Heart left ventricle (tissue), 16 donors: ENCODE measurements at regions of chr18 and their contacts with region 1.

Region 1: GRCh38 chr18:55405893-55406406 is 182.0 kb downstream of the TCF4 start:
- DNase-seq: peak; percentile 87 to 93 (median 92)
- ATAC-seq: peak; percentile 83 to 91 (median 88)
- H3K4me3 ChIP-seq: peak overlapping the region in 1 of 12 donors; percentile 3
- H3K27ac ChIP-seq: peak overlapping the region; percentile 50 to 86 (median 80)
- H3K4me1 ChIP-seq: peaks cover 0 to 55% (median 20%) of the 10 kb centered on the region in 12 donors
- H3K27me3 ChIP-seq: no peaks in the 10 kb centered on the region
- CTCF ChIP-seq: peak in 5 of 12 donors; percentile 5 to 35 (median 22)
- POLR2A ChIP-seq: no peak

Region 2: DNA sequence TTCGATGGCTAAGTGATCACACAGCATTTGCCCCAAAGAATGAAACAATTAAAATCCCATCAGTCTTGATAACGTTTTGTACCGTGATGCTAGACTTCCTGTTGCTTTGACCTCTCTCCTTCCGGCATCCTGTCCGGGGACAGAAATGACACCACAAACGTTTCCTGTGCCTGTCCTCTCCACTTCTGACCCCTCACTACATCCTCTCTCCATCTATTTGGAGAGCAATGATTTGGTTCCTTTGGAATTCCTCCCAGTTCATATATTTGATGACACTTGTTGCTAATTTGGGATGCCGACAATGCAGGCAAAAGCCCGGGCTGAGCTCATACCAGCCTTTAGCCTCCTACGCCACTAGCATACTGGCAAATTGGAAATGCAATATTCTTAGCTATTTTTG is 295.5 kb before region 1 on chr18:
- intact Hi-C with region 1: loop called in 1 of 10 experiments (anchors 10 kb)
- DNase-seq: peak in 4 of 5 donors; percentile 35 to 69 (median 48)
- ATAC-seq: peak; percentile 83 to 96 (median 90)
- H3K4me3 ChIP-seq: no peak overlapping the region
- H3K27ac ChIP-seq: peak overlapping the region in 11 of 12 donors; percentile 39 to 88 (median 77)
- H3K4me1 ChIP-seq: peaks cover 0 to 28% (median 8%) of the 10 kb centered on the region in 12 donors
- H3K27me3 ChIP-seq: no peaks in the 10 kb centered on the region
- CTCF ChIP-seq: no peak
- POLR2A ChIP-seq: no peak

Region 3: GRCh38 chr18:55337908-55338521 is 67.9 kb before region 1 on chr18:
- intact Hi-C with region 1: loop called in 4 of 10 experiments (anchors 5 to 10 kb)
- DNase-seq: peak; percentile 33 to 60 (median 44)
- ATAC-seq: peak; percentile 43 to 87 (median 82)
- H3K4me3 ChIP-seq: peak overlapping the region in 8 of 12 donors; percentile 5 to 41 (median 33)
- H3K27ac ChIP-seq: peak overlapping the region; percentile 24 to 90 (median 84)
- H3K4me1 ChIP-seq: peaks cover 4 to 71% (median 37%) of the 10 kb centered on the region in 12 donors
- H3K27me3 ChIP-seq: no peaks in the 10 kb centered on the region
- CTCF ChIP-seq: no peak
- POLR2A ChIP-seq: peak in 1 of 2 donors; percentile 43

Region 4: DNA sequence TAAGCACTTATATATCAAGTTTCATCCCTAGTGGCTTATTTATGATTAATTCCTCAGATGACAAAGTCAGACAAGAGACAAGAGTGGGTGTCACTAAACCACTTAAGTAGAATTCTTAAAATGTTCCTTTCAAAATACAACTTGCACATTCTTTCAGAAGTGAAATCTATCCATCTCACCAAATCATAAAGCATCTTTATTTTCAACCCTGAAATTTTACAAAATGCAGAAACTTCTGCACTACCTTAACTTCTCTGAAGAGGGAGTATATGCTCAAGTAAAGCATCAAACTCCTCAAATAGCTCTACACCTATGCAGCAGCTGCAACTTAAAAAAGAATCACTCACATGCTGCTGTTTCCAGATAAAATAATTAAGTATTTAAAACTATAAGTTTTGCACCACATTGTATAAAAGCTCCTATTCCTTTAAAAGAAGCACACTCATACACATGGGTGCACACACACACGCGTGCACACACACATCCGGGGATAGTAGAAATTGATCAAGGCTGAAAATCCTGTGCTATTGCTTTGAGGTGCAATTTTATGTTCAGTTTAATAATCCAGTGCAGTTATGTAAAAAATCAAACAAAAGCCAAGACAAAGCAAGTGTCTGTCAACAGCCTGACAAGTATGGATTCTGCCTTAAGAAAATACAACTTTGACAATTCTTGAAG is 62.4 kb before region 1 on chr18:
- intact Hi-C with region 1: loop called in 5 of 10 experiments (anchors 5 to 10 kb)
- DNase-seq: no peak
- ATAC-seq: peak in 3 of 4 donors; percentile 56 to 64 (median 57)
- H3K4me3 ChIP-seq: no peak overlapping the region
- H3K27ac ChIP-seq: peak overlapping the region in 2 of 12 donors; percentile 4 to 21
- H3K4me1 ChIP-seq: peaks cover 0 to 61% (median 17%) of the 10 kb centered on the region in 12 donors
- H3K27me3 ChIP-seq: no peaks in the 10 kb centered on the region
- CTCF ChIP-seq: peak; percentile 38 to 74 (median 58)
- POLR2A ChIP-seq: no peak

Region 5: DNA sequence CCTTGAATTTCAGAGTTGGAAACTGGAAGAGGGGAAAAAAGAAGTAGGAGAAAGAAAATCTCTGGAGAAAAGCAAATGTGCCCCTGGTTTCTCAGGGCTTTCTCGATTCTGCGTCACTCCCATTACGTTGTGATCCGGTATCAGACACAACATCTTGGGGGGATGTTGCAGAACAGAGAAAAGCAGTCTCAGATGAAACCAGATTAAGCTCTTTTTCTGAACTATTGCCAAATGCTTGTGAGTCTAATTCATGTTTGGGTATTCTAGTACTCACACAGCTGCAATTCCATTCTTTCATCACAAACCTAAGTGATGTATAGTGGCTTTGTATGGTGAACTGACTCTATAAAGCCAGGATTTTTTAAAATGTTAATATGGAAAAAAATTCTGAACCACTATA is 51.2 kb before region 1 on chr18:
- intact Hi-C with region 1: loop called in 4 of 10 experiments (anchors 5 to 10 kb)
- DNase-seq: no peak
- ATAC-seq: no peak
- H3K4me3 ChIP-seq: no peak overlapping the region
- H3K27ac ChIP-seq: peak overlapping the region in 1 of 12 donors; percentile 37
- H3K4me1 ChIP-seq: peaks cover 0 to 35% (median 15%) of the 10 kb centered on the region in 12 donors
- H3K27me3 ChIP-seq: no peaks in the 10 kb centered on the region
- CTCF ChIP-seq: no peak
- POLR2A ChIP-seq: no peak

Region 6: GRCh38 chr18:55522011-55522410 is 116.1 kb after region 1 on chr18:
- intact Hi-C with region 1: no loop called
- DNase-seq: peak in 1 of 5 donors; percentile 32
- ATAC-seq: peak in 1 of 4 donors; percentile 16
- H3K4me3 ChIP-seq: no peak overlapping the region
- H3K27ac ChIP-seq: peak overlapping the region in 3 of 12 donors; percentile 3 to 26 (median 6)
- H3K4me1 ChIP-seq: peaks cover 0 to 33% (median 5%) of the 10 kb centered on the region in 12 donors
- H3K27me3 ChIP-seq: no peaks in the 10 kb centered on the region
- CTCF ChIP-seq: peak in 7 of 12 donors; percentile 16 to 50 (median 32)
- POLR2A ChIP-seq: no peak

Region 7: DNA sequence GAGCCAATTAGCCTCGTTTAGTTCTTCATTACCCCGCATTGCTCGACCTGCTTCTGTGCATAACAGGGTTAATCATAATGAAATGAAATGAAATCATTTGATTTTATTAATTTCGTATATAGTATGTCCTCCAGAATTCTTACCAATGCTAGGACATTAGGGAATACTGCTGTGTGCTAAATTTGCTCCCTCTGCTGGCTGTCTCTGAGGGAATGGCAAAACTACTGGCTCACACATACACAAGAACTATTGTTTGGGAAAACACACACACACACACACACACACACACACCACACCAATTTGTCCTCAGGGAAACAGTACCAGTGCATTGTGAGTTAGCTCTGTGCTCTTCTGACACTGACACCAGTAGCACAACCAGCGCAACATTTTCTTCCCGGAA is 455.3 kb after region 1 on chr18:
- intact Hi-C with region 1: loop called in 4 of 10 experiments (anchors 10 kb)
- DNase-seq: no peak
- ATAC-seq: peak in 1 of 4 donors; percentile 24
- H3K4me3 ChIP-seq: no peak overlapping the region
- H3K27ac ChIP-seq: no peak overlapping the region
- H3K4me1 ChIP-seq: peaks cover 0 to 23% (median 6%) of the 10 kb centered on the region in 12 donors
- H3K27me3 ChIP-seq: no peaks in the 10 kb centered on the region
- CTCF ChIP-seq: peak in 9 of 12 donors; percentile 28 to 57 (median 41)
- POLR2A ChIP-seq: no peak

Region 8: DNA sequence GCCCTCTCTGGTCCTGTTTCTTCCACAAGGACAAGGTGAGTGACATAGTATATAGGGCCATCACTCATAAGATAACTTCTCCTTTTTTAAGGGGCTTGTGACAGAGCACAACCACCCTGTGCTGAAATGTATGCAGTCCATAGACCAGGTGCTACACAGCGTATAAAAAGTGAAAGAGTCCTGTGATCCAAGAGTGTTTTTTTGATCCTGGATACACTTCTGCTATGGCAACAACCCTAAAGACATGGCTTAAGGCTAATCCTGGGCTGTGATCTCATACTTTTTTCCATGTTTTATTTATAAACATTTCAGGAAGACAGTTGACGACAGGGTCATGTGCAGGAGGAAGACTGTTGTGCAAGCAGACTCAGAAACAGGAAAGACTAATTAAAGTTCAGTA is 582.6 kb after region 1 on chr18:
- intact Hi-C with region 1: loop called in 1 of 10 experiments (anchors 10 kb)
- DNase-seq: peak in 4 of 5 donors; percentile 36 to 70 (median 46)
- ATAC-seq: peak; percentile 94 to 98 (median 96)
- H3K4me3 ChIP-seq: no peak overlapping the region
- H3K27ac ChIP-seq: peak overlapping the region; percentile 11 to 90 (median 71)
- H3K4me1 ChIP-seq: peaks cover 0 to 14% (median 2%) of the 10 kb centered on the region in 12 donors
- H3K27me3 ChIP-seq: no peaks in the 10 kb centered on the region
- CTCF ChIP-seq: no peak
- POLR2A ChIP-seq: no peak